Right ventricle myocardium inferior (tissue), 1 donor: ENCODE measurements at regions of chr5 and their contacts with region 1.

Region 1: GRCh38 chr5:71882826-71883744 is 164.0 kb downstream of the CARTPT start:
- DNase-seq: no peak
- ATAC-seq: peak; percentile 71

Region 2: DNA sequence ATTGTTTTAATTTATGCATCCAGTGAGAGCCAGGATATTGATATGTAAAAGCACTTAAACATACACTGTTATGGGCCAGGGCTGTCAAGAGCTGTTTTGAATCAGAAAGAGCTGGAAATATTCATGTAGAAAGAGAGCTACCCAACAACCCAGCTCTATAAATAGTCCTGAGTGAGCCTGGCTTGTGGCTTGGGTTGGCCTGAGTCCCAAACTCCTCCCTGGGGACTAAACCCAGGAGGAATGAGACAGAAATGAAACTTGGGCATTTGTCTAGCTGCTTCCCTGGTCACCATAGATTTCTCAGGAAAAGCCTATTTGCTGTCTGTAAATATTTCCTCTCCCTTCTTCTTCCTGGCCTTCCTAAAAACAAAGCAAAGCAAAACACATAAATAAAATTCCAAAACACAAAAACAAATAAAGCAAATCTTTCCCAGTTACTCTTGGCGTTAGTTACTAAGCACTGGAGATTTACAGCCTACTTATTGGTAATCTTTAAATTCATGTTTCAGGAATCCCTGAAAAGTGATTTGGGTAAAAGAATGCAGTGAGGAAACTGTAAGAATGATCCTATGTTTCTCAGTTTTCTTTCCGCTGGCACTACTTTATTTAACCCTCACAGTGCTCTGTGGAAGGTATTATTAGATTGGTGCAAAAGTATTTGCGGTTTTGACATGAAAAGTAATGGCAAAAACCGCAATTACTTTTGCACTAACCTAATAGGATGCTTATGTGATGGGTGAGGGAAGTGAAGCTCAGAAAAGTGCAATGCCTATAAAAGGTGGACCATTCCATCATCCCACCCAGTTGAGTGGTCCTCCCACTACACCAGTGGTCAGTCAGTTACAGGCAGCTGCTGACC is 52.2 kb before region 1 on chr5:
- intact Hi-C with region 1: loop called (anchors 5 kb)
- DNase-seq: peak; percentile 79
- ATAC-seq: peak; percentile 90

Region 3: GRCh38 chr5:71924990-71925389 is 41.9 kb after region 1 on chr5:
- intact Hi-C with region 1: loop called (anchors 5 kb)
- DNase-seq: no peak
- ATAC-seq: no peak

Region 4: DNA sequence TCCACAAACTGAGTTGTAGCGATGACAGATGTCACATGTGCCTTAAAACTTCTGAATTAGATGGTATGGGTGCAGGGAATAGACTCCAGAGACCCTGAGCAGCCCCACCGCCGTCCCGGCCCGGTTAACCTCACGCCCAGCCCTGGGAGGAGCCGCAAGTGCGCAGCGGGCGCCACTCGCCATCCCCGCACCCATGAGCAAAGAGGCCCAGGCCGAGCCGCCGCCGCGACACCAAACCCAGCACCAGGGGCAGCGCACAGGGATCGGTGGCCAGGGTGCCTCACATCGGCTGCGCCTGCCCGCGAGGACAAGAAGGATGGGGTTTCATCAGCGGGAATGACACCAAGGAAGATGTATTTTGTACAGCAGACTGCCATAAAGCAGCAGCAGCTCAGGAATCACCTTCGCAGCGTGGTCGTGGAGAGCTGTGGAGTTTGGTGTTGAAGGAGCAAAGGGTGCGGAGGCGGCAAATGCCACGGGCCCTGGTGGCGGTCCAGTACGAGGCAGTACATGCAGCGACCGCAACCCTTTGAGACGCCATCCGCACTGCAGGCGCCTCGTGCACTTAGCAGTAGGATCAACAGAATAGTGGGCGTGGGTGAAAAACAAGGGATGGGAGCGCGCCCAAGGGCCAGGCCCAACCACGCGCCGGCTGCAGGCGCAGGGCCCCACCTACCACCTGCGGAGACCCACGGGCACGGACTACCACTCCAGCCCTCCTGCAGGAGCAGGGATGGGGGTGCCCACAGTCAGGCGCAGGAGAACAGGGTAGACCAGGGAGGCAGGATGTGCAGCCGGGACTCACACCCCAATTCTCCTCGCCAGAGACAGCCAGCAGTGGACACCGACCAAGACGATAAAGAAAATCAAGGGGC is 534.5 kb after region 1 on chr5:
- intact Hi-C with region 1: no loop called
- DNase-seq: no peak
- ATAC-seq: no peak

Region 5: GRCh38 chr5:72584466-72584865 is 701.4 kb after region 1 on chr5:
- intact Hi-C with region 1: no loop called
- DNase-seq: no peak
- ATAC-seq: no peak